ENCODE measurements at regions of chr6 and their contacts with region 1.

Region 1: DNA sequence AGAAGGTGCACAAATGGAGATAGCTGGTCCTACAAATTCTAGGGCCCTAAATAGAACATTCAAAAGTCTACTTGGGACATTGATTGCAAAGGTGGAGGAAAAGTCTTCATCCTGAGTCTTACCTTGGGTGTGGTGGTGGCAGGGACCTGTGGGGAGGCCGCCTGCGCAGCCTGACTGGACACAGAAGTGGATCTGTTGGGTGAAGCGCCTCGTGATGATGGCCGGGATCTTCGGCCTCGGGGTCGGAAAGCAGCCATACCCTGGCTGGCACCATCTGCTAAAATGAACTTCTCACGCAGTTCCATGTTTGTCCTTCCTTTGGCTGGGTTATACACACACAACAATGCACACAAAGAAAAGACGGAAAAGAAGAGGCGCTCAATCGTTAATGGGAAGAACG is 179.2 kb downstream of the DST start:
- DNase-seq: no peak
- ATAC-seq: no peak
- H3K4me3 ChIP-seq: no peak overlapping the region
- H3K27ac ChIP-seq: no peak overlapping the region
- H3K4me1 ChIP-seq: no peaks in the 10 kb centered on the region
- H3K27me3 ChIP-seq: no peaks in the 10 kb centered on the region
- CTCF ChIP-seq: no peak
- POLR2A ChIP-seq: no peak

Region 2: GRCh38 chr6:56604186-56604585 is 140.7 kb after region 1 on chr6:
- in situ Hi-C with region 1: no loop called
- intact Hi-C with region 1: loop called (anchors 10 kb)
- DNase-seq: no peak
- ATAC-seq: no peak
- H3K4me3 ChIP-seq: no peak overlapping the region
- H3K27ac ChIP-seq: no peak overlapping the region
- H3K4me1 ChIP-seq: no peaks in the 10 kb centered on the region
- H3K27me3 ChIP-seq: no peaks in the 10 kb centered on the region
- CTCF ChIP-seq: no peak
- POLR2A ChIP-seq: no peak

Region 3: GRCh38 chr6:56808871-56809359 is 345.5 kb after region 1 on chr6:
- in situ Hi-C with region 1: no loop called
- intact Hi-C with region 1: no loop called
- DNase-seq: peak in 1 of 2 donors; percentile 54
- ATAC-seq: peak; percentile 55 to 79
- H3K4me3 ChIP-seq: no peak overlapping the region
- H3K27ac ChIP-seq: peak overlapping the region; percentile 87 to 93 (median 87)
- H3K4me1 ChIP-seq: peaks cover 70 to 74% of the 10 kb centered on the region in 2 donors
- H3K27me3 ChIP-seq: no peaks in the 10 kb centered on the region
- CTCF ChIP-seq: no peak
- POLR2A ChIP-seq: no peak

Measured in gastrocnemius medialis (tissue), 4 donors.